ENCODE measurements at regions of chr12 and their contacts with region 1.

Region 1: GRCh38 chr12:8549381-8549780 is 8.7 kb upstream of the CLEC4E start:
- DNase-seq: no peak
- ATAC-seq: no peak
- H3K4me3 ChIP-seq: no peak overlapping the region
- H3K27ac ChIP-seq: no peak overlapping the region
- H3K4me1 ChIP-seq: no peaks in the 10 kb centered on the region
- H3K27me3 ChIP-seq: no peaks in the 10 kb centered on the region
- CTCF ChIP-seq: no peak

Region 2: GRCh38 chr12:8562310-8562709 is 12.9 kb after region 1 on chr12:
- intact Hi-C with region 1: no loop called
- DNase-seq: no peak
- ATAC-seq: no peak
- H3K4me3 ChIP-seq: no peak overlapping the region
- H3K27ac ChIP-seq: no peak overlapping the region
- H3K4me1 ChIP-seq: no peaks in the 10 kb centered on the region
- H3K27me3 ChIP-seq: peaks cover 0 to 2% (median 0%) of the 10 kb centered on the region in 3 donors
- CTCF ChIP-seq: no peak

Region 3: DNA sequence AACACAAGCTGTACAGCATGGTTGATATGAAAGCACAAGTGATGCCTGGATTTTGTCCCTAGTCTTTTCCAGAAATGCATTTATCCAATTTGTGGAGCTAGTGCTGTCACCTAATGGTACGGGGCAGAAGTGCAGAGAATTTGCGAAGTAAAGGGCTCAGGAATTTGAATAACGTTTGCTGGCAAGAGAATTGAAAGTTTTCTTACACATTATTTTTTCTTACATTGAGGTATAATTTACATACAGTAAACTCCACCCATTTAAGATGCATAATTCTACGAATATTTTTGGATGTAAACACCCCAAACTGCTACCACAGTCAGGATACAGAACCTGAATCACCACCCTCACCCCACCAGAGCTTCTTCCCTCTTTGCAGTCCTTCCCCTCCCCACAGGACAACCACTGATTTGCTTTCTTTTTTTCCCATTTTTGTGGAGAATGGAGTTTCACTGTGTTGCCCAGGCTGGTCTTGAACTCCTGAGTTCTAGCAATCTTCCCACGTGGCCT is 59.7 kb after region 1 on chr12:
- intact Hi-C with region 1: loop called in 1 of 2 experiments (anchors 5 kb)
- DNase-seq: no peak
- ATAC-seq: no peak
- H3K4me3 ChIP-seq: no peak overlapping the region
- H3K27ac ChIP-seq: no peak overlapping the region
- H3K4me1 ChIP-seq: no peaks in the 10 kb centered on the region
- H3K27me3 ChIP-seq: no peaks in the 10 kb centered on the region
- CTCF ChIP-seq: peak; percentile 45

Measured in psoas muscle (tissue), 8 donors.